ENCODE measurements at regions of chr3 and their contacts with region 1.

Region 1: GRCh38 chr3:113736548-113737089 is 9.4 kb downstream of the NAA50 start:
- DNase-seq: peak; percentile 36
- ATAC-seq: peak; percentile 78
- H3K4me3 ChIP-seq: no peak overlapping the region
- H3K27ac ChIP-seq: no peak overlapping the region
- H3K4me1 ChIP-seq: 0 out of 4 replicates have a peak, but pooled peaks cover 0 to 2% of the 10 kb centered on the region in 2 experiments
- H3K27me3 ChIP-seq: no peaks in the 10 kb centered on the region
- CTCF ChIP-seq: peak; percentile 43 to 71 (median 61)
- POLR2A ChIP-seq: no peak
- RAD21 ChIP-seq: peak; percentile 77

Region 2: DNA sequence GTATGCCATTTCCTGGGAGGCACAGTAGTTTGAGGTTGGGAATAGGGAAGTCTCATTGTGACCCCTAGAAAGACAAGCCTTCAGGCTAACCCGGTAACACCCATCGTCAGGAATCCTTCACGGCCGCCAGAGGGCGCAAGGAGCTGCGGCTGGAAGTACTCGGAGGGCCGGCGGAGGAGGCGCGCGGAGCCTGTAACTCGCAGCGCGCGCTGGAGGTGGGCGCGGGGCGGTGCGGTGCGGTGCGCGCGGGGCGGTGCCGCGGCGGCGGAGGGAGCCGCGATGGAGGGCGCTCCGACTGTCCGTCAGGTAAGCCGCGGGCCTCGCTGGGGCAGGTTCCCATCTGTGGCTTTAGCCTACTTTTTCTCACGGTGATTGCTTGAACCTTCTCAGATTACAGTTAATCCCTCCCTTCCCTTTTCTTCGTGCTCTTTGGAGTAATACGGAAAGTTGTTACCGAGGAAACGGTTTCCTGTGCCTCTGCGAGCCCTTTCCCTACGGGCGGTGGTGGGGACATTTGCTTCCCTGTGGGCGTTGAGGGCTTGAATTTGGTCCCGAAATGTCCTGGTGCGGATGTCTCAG is 102.1 kb after region 1 on chr3 and contains the start of gene GRAMD1C:
- CTCF ChIA-PET with region 1: interaction called, 3 read pairs
- POLR2A ChIA-PET with region 1: no interaction called
- RAD21 ChIA-PET with region 1: no interaction called
- intact Hi-C with region 1: loop called (anchors 2 kb)
- DNase-seq: peak; percentile 82
- ATAC-seq: peak; percentile 97
- H3K4me3 ChIP-seq: peak within 1 kb of the TSS; percentile 66 to 74
- H3K27ac ChIP-seq: peak within 1 kb of the TSS; percentile 21; the same call in 1 of the 2 replicates
- H3K4me1 ChIP-seq: peaks cover 0 to 15% of the 10 kb centered on the region in 2 experiments; a peak in 1 of 4 replicates
- H3K27me3 ChIP-seq: no peaks in the 10 kb centered on the region
- CTCF ChIP-seq: peak; percentile 73 to 90 (median 83)
- POLR2A ChIP-seq: no peak
- RAD21 ChIP-seq: peak; percentile 75
- total RNA-seq, gene GRAMD1C: 7.9 TPM

Region 3: DNA sequence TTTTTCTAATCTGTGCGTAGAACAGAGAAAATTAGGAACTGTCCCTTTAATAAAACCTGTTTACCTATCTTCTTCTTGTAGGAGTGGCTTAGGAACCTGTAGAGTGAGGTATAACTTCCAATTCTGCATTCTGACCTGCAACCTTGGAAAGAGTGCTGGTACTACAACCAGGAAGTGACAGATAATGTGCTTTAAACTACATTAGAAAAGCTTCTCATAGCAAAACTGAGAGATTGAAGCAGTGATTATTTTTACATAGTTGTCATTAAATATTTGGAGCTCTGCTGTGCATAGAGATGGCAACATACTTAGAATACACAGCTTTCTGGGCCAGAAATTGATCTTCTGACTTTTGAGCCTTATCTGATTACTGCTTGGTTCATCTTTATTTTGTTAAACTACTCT is 160.8 kb after region 1 on chr3:
- CTCF ChIA-PET with region 1: interaction called, 4 read pairs
- POLR2A ChIA-PET with region 1: no interaction called
- RAD21 ChIA-PET with region 1: no interaction called
- intact Hi-C with region 1: loop called (anchors 1 kb)
- DNase-seq: peak; percentile 3
- ATAC-seq: peak; percentile 70
- H3K4me3 ChIP-seq: peak overlapping the region in 1 of 2 experiments; percentile 37; a peak in 2 of 4 replicates
- H3K27ac ChIP-seq: no peak overlapping the region
- H3K4me1 ChIP-seq: peaks cover 0 to 10% of the 10 kb centered on the region in 2 experiments; a peak in 2 of 4 replicates
- H3K27me3 ChIP-seq: no peaks in the 10 kb centered on the region
- CTCF ChIP-seq: no peak
- POLR2A ChIP-seq: no peak
- RAD21 ChIP-seq: no peak

Region 4: GRCh38 chr3:113912552-113913236 is 176.1 kb after region 1 on chr3:
- CTCF ChIA-PET with region 1: interaction called, 11 read pairs
- POLR2A ChIA-PET with region 1: no interaction called
- RAD21 ChIA-PET with region 1: interaction called in 1 of 2 experiments, 4 read pairs
- intact Hi-C with region 1: loop called (anchors 1 kb)
- DNase-seq: peak; percentile 68
- ATAC-seq: peak; percentile 93
- H3K4me3 ChIP-seq: no peak overlapping the region
- H3K27ac ChIP-seq: no peak overlapping the region
- H3K4me1 ChIP-seq: peaks cover 0 to 4% of the 10 kb centered on the region in 2 experiments; a peak in 1 of 4 replicates
- H3K27me3 ChIP-seq: no peaks in the 10 kb centered on the region
- CTCF ChIP-seq: peak; percentile 73 to 88 (median 77)
- POLR2A ChIP-seq: no peak
- RAD21 ChIP-seq: peak; percentile 92

Region 5: DNA sequence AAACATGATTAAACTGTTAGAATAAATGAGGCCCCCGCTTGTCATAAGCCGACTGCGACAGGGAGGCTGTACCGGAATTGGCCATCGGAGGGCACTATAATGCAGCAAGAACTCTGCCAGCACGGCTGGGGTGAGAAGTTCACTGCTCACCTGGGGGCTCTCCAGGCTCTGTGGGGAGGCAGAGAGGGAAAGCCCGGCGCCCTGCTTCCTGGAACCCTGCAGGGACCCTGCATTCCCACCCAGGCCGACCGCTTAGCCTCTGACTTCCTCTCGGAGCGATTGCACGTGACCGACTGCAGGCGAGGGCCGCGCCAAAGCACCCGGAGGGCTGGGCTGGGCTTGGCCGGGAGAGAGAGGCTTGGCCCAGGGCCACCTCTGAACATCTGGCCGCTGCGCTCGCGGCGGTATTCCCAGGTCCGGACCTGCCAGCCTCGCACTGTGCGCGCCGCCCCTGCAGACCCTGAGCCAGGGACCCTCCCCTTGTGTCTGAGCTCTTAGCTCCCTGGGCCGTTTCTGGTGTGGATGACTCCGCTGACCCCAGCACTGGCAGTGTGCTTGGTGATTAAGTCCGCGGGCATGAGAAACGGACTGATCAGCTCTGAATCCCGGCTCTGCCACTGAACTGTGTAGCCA is 416.0 kb after region 1 on chr3:
- CTCF ChIA-PET with region 1: interaction called, 4 read pairs
- POLR2A ChIA-PET with region 1: no interaction called
- RAD21 ChIA-PET with region 1: no interaction called
- intact Hi-C with region 1: loop called (anchors 5 kb)
- DNase-seq: peak; percentile 68
- ATAC-seq: peak; percentile 88
- H3K4me3 ChIP-seq: peak overlapping the region; percentile 41 to 57
- H3K27ac ChIP-seq: peak overlapping the region; percentile 41; the same call in 1 of the 2 replicates
- H3K4me1 ChIP-seq: peaks cover 0 to 11% of the 10 kb centered on the region in 2 experiments; a peak in 2 of 4 replicates
- H3K27me3 ChIP-seq: no peaks in the 10 kb centered on the region
- CTCF ChIP-seq: peak; percentile 88 to 97 (median 93)
- POLR2A ChIP-seq: no peak
- RAD21 ChIP-seq: peak; percentile 92

Measured in HCT116 (cell line).